Activated B cell treated with CpG ODN at 0.5 μM for 24 hours (primary cell): ENCODE measurements at regions of chr12 and their contacts with region 1.

Region 1: GRCh38 chr12:65169320-65170208 is at the start of gene LEMD3:
- DNase-seq: peak; percentile 87
- ATAC-seq: peak; percentile 93
- H3K4me3 Mint-ChIP-seq: peak within 1 kb of the TSS; percentile 100
- H3K27ac Mint-ChIP-seq: peak within 1 kb of the TSS; percentile 99
- H3K4me1 Mint-ChIP-seq: peaks cover 43% of the 10 kb centered on the region
- H3K27me3 Mint-ChIP-seq: no peaks in the 10 kb centered on the region
- CTCF ChIP-seq: no peak
- total RNA-seq, gene LEMD3: 38.2 and 45.5 TPM in 2 replicates

Region 2: GRCh38 chr12:64403707-64404469 is 765.7 kb before region 1 on chr12 and contains the start of gene XPOT:
- CTCF ChIA-PET with region 1: no interaction called
- POLR2A ChIA-PET with region 1: interaction called, 3 read pairs
- intact Hi-C with region 1: loop called (anchors 1 kb)
- DNase-seq: peak; percentile 88
- ATAC-seq: peak; percentile 91
- H3K4me3 Mint-ChIP-seq: peak within 1 kb of the TSS; percentile 96
- H3K27ac Mint-ChIP-seq: peak within 1 kb of the TSS; percentile 96
- H3K4me1 Mint-ChIP-seq: peaks cover 16% of the 10 kb centered on the region
- H3K27me3 Mint-ChIP-seq: peaks cover 3% of the 10 kb centered on the region
- CTCF ChIP-seq: no peak
- total RNA-seq, gene XPOT: 81.3 and 96.2 TPM in 2 replicates

Region 3: DNA sequence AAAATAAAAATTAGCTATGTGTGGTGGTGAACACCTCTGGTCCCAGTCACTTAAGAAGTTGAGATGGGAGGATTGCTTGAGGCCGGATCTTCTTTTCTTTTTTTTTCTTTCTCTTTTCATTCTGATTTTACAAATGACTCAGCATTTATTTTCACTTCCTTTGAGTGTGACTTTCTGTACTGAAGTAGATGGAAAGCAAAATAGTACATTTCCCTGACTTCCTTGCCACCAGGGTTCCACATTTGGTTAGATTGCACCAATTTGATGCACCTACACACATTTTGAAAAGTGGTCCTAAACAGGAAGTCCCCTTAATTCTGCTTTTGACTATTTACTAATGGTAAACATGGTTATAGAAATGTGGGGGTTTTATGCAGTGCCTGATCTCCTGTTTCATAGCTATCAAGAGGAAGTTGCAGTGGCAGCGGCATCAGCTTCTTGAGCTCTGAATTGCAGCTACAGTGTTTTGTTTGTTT is 13.2 kb before region 1 on chr12:
- CTCF ChIA-PET with region 1: interaction called, 5 read pairs
- POLR2A ChIA-PET with region 1: interaction called, 44 read pairs
- intact Hi-C with region 1: loop called (anchors 1 kb)
- DNase-seq: no peak
- ATAC-seq: peak; percentile 76
- H3K4me3 Mint-ChIP-seq: peak overlapping the region; percentile 54
- H3K27ac Mint-ChIP-seq: peak overlapping the region; percentile 71
- H3K4me1 Mint-ChIP-seq: peaks cover 14% of the 10 kb centered on the region
- H3K27me3 Mint-ChIP-seq: peaks cover 2% of the 10 kb centered on the region
- CTCF ChIP-seq: no peak

Region 4: DNA sequence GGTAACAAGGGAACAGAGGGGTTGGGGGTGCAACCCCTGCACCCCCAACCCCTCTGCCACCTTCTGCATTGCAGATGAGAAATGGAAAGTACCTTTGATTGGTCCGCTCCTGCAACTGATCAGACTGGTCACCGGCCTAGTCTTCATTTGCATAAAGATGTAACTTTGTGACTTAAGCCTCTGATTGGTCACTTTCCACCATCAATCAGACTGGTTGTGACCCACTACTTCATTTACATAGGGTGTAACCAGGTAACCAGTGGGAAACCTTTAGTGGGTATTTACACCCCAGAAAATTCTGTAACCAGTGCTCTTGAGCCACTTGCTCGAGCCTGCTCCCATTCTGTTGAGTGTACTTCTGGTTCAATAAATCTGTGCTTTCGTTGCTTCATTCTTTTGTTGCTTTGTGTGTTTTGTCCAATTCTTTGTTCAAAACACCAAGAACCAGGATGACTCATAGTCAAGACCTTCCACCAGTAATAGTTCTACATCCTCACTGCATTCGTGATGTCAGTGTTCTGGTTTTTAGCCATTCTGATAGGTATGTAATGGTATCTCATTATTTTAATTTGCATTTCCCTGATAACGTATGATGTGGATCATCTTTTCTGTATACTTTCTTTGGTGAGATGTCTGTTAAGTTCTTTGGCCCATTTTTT is 30.6 kb after region 1 on chr12:
- CTCF ChIA-PET with region 1: no interaction called
- POLR2A ChIA-PET with region 1: interaction called, 13 read pairs
- intact Hi-C with region 1: no loop called
- DNase-seq: no peak
- ATAC-seq: no peak
- H3K4me3 Mint-ChIP-seq: no peak overlapping the region
- H3K27ac Mint-ChIP-seq: no peak overlapping the region
- H3K4me1 Mint-ChIP-seq: peaks cover 79% of the 10 kb centered on the region
- H3K27me3 Mint-ChIP-seq: no peaks in the 10 kb centered on the region
- CTCF ChIP-seq: no peak

Region 5: DNA sequence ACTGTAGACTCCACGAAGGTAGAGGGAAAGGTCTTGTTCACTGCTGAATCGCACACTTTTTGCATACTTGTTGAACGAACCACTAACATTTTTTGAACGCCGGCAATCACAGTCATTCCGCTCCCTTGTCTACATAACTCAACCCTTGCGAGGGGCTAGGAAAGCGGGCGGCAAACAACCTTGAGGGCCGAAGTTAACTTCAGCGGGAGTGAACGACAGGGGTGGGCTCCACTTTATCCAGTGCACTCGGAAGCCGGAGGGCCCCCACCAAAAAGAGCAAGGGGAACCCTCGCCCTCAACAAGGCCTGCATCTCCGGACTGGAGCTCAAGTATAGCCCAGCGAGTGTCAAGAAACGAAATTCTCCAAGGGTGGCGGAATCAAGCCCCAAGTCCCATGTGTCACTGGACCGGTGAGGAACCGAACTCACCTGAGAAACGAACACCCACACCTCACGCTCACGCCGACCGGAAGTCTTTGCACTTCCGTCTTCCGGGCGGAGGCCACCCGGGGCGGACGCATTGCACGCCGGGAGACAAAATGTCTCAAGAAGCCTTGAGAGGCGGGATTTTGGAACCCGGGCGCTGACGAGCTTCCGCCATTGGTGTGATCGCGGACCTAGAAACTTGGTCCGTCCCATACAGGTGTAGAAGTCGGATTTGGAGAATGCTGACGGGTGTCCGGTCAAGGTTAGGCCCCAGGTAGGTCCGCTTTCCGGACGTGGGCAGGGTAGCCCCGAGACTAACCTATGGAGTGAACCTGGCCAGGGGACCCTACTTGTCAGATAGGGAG is 960.9 kb after region 1 on chr12 and contains the start of gene LLPH:
- CTCF ChIA-PET with region 1: no interaction called
- POLR2A ChIA-PET with region 1: interaction called, 5 read pairs
- intact Hi-C with region 1: loop called (anchors 1 kb)
- DNase-seq: peak; percentile 78
- ATAC-seq: peak; percentile 94
- H3K4me3 Mint-ChIP-seq: peak within 1 kb of the TSS; percentile 99
- H3K27ac Mint-ChIP-seq: peak within 1 kb of the TSS; percentile 96
- H3K4me1 Mint-ChIP-seq: peaks cover 43% of the 10 kb centered on the region
- H3K27me3 Mint-ChIP-seq: no peaks in the 10 kb centered on the region
- CTCF ChIP-seq: no peak
- total RNA-seq, gene LLPH: 29.5 and 35.5 TPM in 2 replicates

Region 6: GRCh38 chr12:66662729-66663128 is 1493.2 kb after region 1 on chr12:
- CTCF ChIA-PET with region 1: no interaction called
- POLR2A ChIA-PET with region 1: no interaction called
- intact Hi-C with region 1: loop called (anchors 10 kb)
- DNase-seq: no peak
- ATAC-seq: peak; percentile 4
- H3K4me3 Mint-ChIP-seq: peak overlapping the region; percentile 50
- H3K27ac Mint-ChIP-seq: peak overlapping the region; percentile 30
- H3K4me1 Mint-ChIP-seq: peaks cover 46% of the 10 kb centered on the region
- H3K27me3 Mint-ChIP-seq: no peaks in the 10 kb centered on the region
- CTCF ChIP-seq: no peak